Endothelial cell of umbilical vein (primary cell): ENCODE measurements at regions of chr13 and their contacts with region 1.

Region 1: DNA sequence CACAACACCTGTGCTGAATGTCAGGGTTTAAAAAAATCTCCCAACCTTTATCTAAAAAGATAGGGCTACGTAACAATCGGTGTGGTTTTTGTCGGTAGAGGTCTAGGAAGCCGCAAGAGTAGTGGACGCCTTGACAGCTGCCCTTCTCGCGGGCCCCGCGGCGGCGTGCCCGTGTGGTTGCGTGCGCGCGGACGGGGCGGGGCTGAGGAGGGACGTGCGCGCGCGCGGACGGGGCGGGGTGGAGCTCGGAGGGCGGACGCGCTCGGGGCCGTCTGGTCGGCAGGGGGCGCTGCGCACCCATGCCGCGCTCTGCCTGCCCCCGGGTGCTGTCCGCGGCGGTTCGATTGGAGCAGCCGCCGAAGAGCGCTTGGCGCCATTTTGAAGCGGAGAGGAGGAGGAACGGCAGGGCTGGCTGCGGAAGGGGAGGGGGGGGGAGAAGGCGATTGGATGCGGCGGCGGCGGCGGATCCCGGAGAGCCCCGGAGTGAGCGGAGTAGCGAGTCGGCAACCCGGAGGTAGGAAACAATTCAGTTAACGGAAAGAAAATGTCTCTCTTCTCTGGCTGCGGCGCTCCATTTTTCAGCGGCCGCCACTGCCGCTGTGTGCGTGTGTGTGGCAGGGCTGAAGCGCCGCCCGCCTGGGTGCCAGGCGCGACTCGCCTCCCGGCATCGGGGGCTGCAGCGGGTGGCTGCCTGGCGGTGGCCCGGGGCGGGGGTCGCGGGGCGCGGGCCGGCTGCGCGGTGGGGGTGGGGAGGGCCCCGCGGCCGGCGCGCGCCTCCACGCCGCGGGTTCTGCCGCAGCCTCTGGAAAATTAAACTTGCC is at the start of gene PDS5B:
- DNase-seq: peak; percentile 96
- H3K4me3 ChIP-seq: peak within 1 kb of the TSS; percentile 43 to 98 (median 89)
- H3K27ac ChIP-seq: peak within 1 kb of the TSS; percentile 86
- H3K4me1 ChIP-seq: peaks cover 20% of the 10 kb centered on the region
- H3K27me3 ChIP-seq: peaks cover 0 to 1% of the 10 kb centered on the region in 2 experiments
- CTCF ChIP-seq: peak; percentile 76 to 93
- POLR2A ChIP-seq: peak; percentile 83
- total RNA-seq, gene PDS5B: 40.3 and 41.0 TPM in 2 replicates

Region 2: GRCh38 chr13:32538621-32539246 is 47.6 kb before region 1 on chr13 and contains the start of gene N4BP2L2:
- CTCF ChIA-PET with region 1: interaction called, 3 read pairs
- POLR2A ChIA-PET with region 1: no interaction called
- dilution Hi-C with region 1: no loop called
- intact Hi-C with region 1: loop called (anchors 2 kb)
- DNase-seq: peak; percentile 99
- H3K4me3 ChIP-seq: peak within 1 kb of the TSS; percentile 75 to 94 (median 83)
- H3K27ac ChIP-seq: peak within 1 kb of the TSS; percentile 84
- H3K4me1 ChIP-seq: peaks cover 19% of the 10 kb centered on the region
- H3K27me3 ChIP-seq: peaks cover 3 to 5% of the 10 kb centered on the region in 2 experiments
- CTCF ChIP-seq: peak; percentile 18 to 41
- POLR2A ChIP-seq: peak; percentile 67
- total RNA-seq, gene N4BP2L2: 95.4 and 101 TPM in 2 replicates

Region 3: GRCh38 chr13:32669030-32669646 is 82.8 kb after region 1 on chr13:
- CTCF ChIA-PET with region 1: interaction called, 17 read pairs
- POLR2A ChIA-PET with region 1: no interaction called
- dilution Hi-C with region 1: no loop called
- intact Hi-C with region 1: loop called (anchors 1 kb)
- DNase-seq: peak; percentile 61
- H3K4me3 ChIP-seq: no peak overlapping the region
- H3K27ac ChIP-seq: no peak overlapping the region
- H3K4me1 ChIP-seq: no peaks in the 10 kb centered on the region
- H3K27me3 ChIP-seq: no peaks in the 10 kb centered on the region
- CTCF ChIP-seq: peak; percentile 44 to 54
- POLR2A ChIP-seq: no peak

Region 4: DNA sequence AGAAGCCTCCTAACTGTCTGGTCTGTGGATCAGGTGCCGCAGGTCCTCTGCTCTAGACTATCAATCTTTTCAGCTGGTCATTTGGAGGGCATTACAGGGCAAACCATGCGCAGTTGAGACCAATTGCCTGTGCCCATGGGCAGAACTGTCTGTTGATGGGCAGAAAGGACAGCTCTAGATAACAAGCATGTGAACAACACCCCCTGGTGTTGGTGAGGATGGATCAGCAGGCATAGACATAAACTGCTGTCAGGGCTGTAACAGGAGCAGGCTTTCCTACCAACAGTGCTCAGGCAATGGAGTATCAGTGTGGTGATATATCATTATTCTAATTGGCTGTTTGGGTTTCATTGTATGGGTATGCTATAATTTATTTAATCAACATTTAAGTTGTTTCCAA is 325.2 kb after region 1 on chr13:
- CTCF ChIA-PET with region 1: interaction called, 5 read pairs
- POLR2A ChIA-PET with region 1: no interaction called
- dilution Hi-C with region 1: no loop called
- intact Hi-C with region 1: loop called (anchors 2 kb)
- DNase-seq: no peak
- H3K4me3 ChIP-seq: no peak overlapping the region
- H3K27ac ChIP-seq: no peak overlapping the region
- H3K4me1 ChIP-seq: no peaks in the 10 kb centered on the region
- H3K27me3 ChIP-seq: no peaks in the 10 kb centered on the region
- CTCF ChIP-seq: peak; percentile 13 to 26
- POLR2A ChIP-seq: no peak

Region 5: GRCh38 chr13:33188093-33188882 is 602.0 kb after region 1 on chr13:
- CTCF ChIA-PET with region 1: no interaction called
- POLR2A ChIA-PET with region 1: no interaction called
- dilution Hi-C with region 1: no loop called
- intact Hi-C with region 1: loop called (anchors 10 kb)
- DNase-seq: peak; percentile 45
- H3K4me3 ChIP-seq: no peak overlapping the region
- H3K27ac ChIP-seq: peak overlapping the region; percentile 84
- H3K4me1 ChIP-seq: peaks cover 50% of the 10 kb centered on the region
- H3K27me3 ChIP-seq: no peaks in the 10 kb centered on the region
- CTCF ChIP-seq: no peak
- POLR2A ChIP-seq: no peak

Region 6: GRCh38 chr13:33494596-33495204 is 908.4 kb after region 1 on chr13:
- CTCF ChIA-PET with region 1: no interaction called
- POLR2A ChIA-PET with region 1: no interaction called
- dilution Hi-C with region 1: no loop called
- intact Hi-C with region 1: loop called (anchors 2 kb)
- DNase-seq: peak; percentile 99
- H3K4me3 ChIP-seq: peak overlapping the region in 1 of 3 experiments; percentile 26
- H3K27ac ChIP-seq: peak overlapping the region; percentile 98
- H3K4me1 ChIP-seq: peaks cover 66% of the 10 kb centered on the region
- H3K27me3 ChIP-seq: no peaks in the 10 kb centered on the region
- CTCF ChIP-seq: no peak
- POLR2A ChIP-seq: peak; percentile 71